Endothelial cell of umbilical vein (primary cell): ENCODE measurements at regions of chr12 and their contacts with region 1.

Region 1: DNA sequence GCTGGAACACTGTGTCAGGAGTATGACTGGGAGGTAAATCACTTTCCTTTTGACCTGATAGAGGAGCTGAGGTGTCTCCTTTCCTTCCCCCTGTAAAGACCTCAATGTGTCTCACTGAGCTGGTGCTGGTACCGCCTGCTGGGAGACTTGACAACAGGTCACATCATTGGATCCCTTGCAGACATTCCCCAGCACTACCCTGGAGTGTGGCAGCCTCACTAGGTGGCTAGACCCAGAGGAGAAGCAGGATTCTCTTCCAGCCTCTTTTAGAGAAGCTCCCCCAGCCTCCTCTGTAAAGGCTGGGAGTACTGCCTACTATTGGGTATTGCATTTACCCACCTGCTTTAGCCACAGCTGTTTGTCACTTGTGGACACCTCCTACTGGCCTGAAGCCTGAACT is 223.9 kb downstream of the ADGRD1 start:
- DNase-seq: no peak
- H3K4me3 ChIP-seq: no peak overlapping the region
- H3K27ac ChIP-seq: no peak overlapping the region
- H3K4me1 ChIP-seq: no peaks in the 10 kb centered on the region
- H3K27me3 ChIP-seq: no peaks in the 10 kb centered on the region
- CTCF ChIP-seq: no peak
- POLR2A ChIP-seq: no peak

Region 2: GRCh38 chr12:130904064-130904463 is 273.5 kb before region 1 on chr12:
- CTCF ChIA-PET with region 1: no interaction called
- POLR2A ChIA-PET with region 1: no interaction called
- dilution Hi-C with region 1: no loop called
- intact Hi-C with region 1: loop called (anchors 5 kb)
- DNase-seq: no peak
- H3K4me3 ChIP-seq: no peak overlapping the region
- H3K27ac ChIP-seq: no peak overlapping the region
- H3K4me1 ChIP-seq: no peaks in the 10 kb centered on the region
- H3K27me3 ChIP-seq: no peaks in the 10 kb centered on the region
- CTCF ChIP-seq: no peak
- POLR2A ChIP-seq: no peak

Region 3: DNA sequence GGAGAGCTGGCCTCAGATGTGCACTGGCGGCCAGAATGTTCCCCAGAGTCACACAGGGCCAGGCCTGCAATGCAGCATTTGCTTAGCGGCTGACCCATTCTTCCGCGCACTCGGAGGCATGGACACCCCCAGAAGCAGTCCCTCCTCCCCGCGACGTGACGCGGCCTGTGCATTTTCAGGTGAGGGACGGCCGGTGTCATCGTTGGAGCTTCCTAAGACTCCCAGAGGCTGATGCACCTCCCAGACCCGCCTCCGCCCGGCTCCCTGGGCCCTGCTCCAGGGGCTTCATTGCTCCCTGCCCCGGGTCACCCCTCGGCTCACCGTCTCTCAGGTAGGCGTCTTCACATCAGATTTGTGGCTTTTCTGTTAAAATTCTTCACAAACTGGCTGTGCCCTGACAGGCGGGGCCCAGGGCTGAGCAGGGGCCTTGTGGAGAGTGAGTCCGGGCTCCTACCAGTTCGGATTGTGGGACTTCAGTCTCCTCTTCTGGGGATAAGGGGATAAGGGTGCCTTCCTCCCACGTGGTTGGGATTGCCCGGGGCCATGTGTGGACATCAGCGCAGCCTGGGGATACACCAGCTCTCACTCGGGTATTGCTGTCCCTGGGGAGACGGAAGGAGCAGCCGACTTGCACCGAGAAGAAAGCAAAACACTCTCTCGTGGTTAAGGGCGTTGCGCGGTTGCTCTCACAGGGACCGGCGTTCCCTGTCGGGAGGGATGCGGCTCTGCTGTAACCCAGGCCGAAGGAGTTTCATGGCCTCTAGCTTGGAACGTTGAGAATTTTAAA is 25.2 kb after region 1 on chr12:
- CTCF ChIA-PET with region 1: no interaction called
- POLR2A ChIA-PET with region 1: no interaction called
- dilution Hi-C with region 1: no loop called
- intact Hi-C with region 1: no loop called
- DNase-seq: no peak
- H3K4me3 ChIP-seq: no peak overlapping the region
- H3K27ac ChIP-seq: no peak overlapping the region
- H3K4me1 ChIP-seq: no peaks in the 10 kb centered on the region
- H3K27me3 ChIP-seq: no peaks in the 10 kb centered on the region
- CTCF ChIP-seq: no peak
- POLR2A ChIP-seq: no peak

Region 4: GRCh38 chr12:131755305-131756113 is 577.9 kb after region 1 on chr12:
- CTCF ChIA-PET with region 1: no interaction called
- POLR2A ChIA-PET with region 1: no interaction called
- dilution Hi-C with region 1: no loop called
- intact Hi-C with region 1: no loop called
- DNase-seq: no peak
- H3K4me3 ChIP-seq: no peak overlapping the region
- H3K27ac ChIP-seq: no peak overlapping the region
- H3K4me1 ChIP-seq: no peaks in the 10 kb centered on the region
- H3K27me3 ChIP-seq: no peaks in the 10 kb centered on the region
- CTCF ChIP-seq: peak; percentile 16 to 27
- POLR2A ChIP-seq: no peak

Region 5: GRCh38 chr12:131860562-131861291 is 683.1 kb after region 1 on chr12:
- CTCF ChIA-PET with region 1: no interaction called
- POLR2A ChIA-PET with region 1: no interaction called
- dilution Hi-C with region 1: no loop called
- intact Hi-C with region 1: no loop called
- DNase-seq: peak; percentile 10
- H3K4me3 ChIP-seq: no peak overlapping the region
- H3K27ac ChIP-seq: no peak overlapping the region
- H3K4me1 ChIP-seq: no peaks in the 10 kb centered on the region
- H3K27me3 ChIP-seq: no peaks in the 10 kb centered on the region
- CTCF ChIP-seq: no peak
- POLR2A ChIP-seq: no peak